ENCODE measurements at regions of chr11 and their contacts with region 1.

Region 1: GRCh38 chr11:34480314-34480713 is 33.3 kb downstream of the ELF5 start:
- DNase-seq: no peak
- CTCF ChIP-seq: no peak

Region 2: GRCh38 chr11:34075178-34075820 is 405.0 kb before region 1 on chr11:
- in situ Hi-C with region 1: no loop called
- DNase-seq: no peak
- CTCF ChIP-seq: no peak

Region 3: DNA sequence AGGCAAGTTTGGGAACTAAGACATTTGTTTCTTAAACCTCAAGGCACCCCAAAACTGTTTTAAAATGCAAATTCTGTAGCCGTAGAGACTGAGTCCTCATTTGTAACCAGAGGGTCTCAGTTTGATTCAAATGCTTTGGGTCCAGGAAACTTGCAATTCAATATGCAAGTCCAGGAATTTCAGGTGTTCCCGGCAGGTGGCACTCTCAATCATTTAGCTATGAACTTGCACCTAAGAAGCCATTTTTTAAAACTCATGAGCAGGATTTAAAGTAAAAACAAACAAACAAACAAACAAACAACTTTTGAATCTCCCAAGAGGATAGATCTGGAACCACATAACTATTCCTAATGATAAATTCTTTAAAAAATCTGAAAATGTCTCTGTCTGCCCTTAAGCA is 113.8 kb before region 1 on chr11:
- in situ Hi-C with region 1: loop called (anchors 10 kb)
- DNase-seq: peak; percentile 46
- CTCF ChIP-seq: no peak

Region 4: GRCh38 chr11:34773826-34774225 is 293.5 kb after region 1 on chr11:
- in situ Hi-C with region 1: no loop called
- DNase-seq: no peak
- CTCF ChIP-seq: no peak